ENCODE measurements at regions of chr22 and their contacts with region 1.

Region 1: DNA sequence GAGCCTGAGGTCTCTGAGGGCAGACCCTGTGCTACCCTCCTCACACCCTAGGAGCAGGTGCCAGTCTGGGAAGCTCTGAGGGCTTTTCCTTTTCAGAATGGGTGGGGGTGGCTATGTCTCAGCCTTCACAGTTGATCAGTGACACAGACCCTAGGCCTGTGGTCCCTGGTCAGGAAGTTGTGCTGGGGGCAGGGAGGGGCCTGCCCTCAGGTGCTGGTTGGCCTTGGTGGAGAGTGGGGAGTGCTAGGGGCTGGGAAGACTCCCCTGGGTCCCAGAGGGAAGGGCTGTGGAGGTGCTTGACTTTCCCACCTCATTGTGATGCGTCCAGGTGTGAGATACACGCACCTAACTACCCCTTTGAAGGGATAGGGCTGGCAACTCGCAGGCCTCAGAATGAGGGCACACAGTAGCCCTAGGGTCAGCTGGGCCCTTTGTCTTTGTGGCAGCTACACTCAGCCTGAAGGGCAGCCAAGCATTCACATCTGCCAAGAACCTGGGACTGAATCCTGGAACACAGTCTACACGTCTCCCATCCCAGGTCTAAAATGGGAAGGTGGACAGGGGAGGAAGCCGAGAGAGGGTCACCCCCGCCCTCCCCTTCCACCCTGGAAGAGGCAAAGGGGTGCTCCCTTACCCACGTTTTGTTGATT is 31.2 kb upstream of the ATXN10 start:
- DNase-seq: peak in 1 of 5 donors; percentile 51
- ATAC-seq: peak; percentile 59 to 78 (median 71)
- H3K4me3 ChIP-seq: no peak overlapping the region
- H3K27ac ChIP-seq: no peak overlapping the region
- H3K4me1 ChIP-seq: peaks cover 0 to 16% (median 2%) of the 10 kb centered on the region in 12 donors
- H3K27me3 ChIP-seq: peaks cover 0 to 40% (median 7%) of the 10 kb centered on the region in 9 donors
- CTCF ChIP-seq: no peak
- POLR2A ChIP-seq: no peak

Region 2: DNA sequence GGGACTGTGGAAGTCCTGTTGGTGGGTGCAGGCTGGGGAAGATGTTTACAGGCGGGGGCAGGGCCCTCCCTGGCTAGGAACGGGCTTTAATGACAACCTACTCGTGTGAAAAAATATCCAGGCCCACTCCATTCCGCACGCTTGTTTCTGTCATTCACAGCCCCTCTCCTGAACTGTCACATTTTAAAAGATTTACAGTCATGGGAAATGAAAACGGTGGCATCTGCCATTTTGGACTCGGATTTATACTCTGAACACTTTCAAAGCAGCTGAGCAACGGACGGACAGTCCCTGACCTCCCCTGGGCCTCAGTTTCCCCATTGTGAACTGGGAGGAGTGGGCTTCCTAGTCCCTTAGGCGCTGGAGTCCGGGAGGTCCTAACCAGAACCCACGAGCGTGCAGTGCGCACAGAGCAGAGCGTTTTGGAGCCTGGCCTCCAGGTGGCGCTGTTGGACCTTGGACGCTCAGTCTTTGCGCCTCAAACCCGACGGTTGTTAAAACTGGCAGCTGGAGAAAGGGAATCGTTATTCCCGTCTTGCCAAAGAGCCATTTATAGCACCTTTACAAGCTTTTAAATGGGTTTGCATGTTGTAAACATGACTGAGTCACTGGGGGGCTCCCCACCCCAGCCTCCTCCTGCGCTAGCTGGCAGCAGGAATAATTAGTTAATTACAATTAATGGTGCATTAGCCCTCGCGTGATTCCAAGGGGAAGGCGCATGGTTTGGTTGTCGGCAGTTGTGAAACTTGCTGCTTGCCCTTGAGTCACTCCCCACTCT is 62.5 kb before region 1 on chr22:
- intact Hi-C with region 1: loop called in 4 of 10 experiments (anchors 1 to 5 kb)
- DNase-seq: peak; percentile 72 to 89 (median 82)
- ATAC-seq: peak; percentile 47 to 81 (median 75)
- H3K4me3 ChIP-seq: no peak overlapping the region
- H3K27ac ChIP-seq: no peak overlapping the region
- H3K4me1 ChIP-seq: peaks cover 0 to 5% (median 0%) of the 10 kb centered on the region in 12 donors
- H3K27me3 ChIP-seq: peaks cover 0 to 18% (median 8%) of the 10 kb centered on the region in 9 donors
- CTCF ChIP-seq: peak; percentile 85 to 95 (median 90)
- POLR2A ChIP-seq: no peak